ENCODE measurements at regions of chr5 and their contacts with region 1.

Region 1: DNA sequence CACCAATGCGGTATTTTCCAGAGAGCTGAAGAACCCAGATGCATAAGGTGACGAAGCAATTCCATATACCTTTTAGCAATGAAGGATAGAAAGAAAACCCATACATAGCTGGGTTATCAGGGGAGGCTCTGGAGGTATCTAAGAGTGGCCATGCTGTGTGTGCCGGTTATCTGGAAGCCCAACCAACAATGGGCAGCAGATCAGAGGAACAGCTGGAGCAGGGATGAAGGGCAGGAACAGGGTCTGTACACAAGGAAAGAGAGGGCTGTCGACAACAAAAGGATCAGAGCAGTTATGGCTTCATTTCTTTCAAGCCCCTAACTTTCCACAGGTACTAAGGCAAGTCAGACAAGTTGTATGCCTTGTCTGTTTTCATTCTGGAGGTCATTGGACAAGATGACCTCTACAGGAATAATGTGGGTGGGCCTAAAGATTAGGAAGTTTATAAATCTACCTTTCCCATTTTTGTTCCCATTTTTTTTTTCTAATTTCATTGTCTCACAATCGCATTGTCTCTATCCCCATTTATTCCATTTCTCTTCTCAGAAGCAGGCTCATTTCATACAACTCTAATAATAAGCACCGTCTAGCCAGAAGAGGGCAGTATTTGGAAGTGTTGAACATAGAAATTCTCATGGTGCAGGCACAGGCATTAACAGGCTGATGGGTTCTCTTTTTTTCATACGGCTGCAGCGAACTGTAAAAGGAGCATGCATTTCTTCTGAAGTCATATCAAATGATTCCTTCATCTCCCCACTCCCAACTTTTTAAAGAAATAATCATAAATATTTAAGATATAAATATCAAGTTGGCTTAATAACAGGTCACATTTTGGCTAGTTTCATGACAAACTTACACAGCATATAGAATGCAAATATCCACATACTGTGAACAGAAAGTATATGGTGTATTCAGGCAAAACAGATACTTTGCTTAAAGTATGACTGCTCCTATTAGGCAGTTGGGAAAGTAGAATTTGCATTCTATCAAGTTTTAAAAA is 63.5 kb downstream of the ZNF474 start:
- DNase-seq: no peak
- H3K4me3 ChIP-seq: no peak overlapping the region
- H3K27ac ChIP-seq: no peak overlapping the region
- H3K4me1 ChIP-seq: no peaks in the 10 kb centered on the region
- H3K27me3 ChIP-seq: no peaks in the 10 kb centered on the region
- CTCF ChIP-seq: peak; percentile 43 to 71 (median 63)

Region 2: GRCh38 chr5:122228728-122229392 is 36.1 kb after region 1 on chr5:
- intact Hi-C with region 1: no loop called
- DNase-seq: no peak
- H3K4me3 ChIP-seq: no peak overlapping the region
- H3K27ac ChIP-seq: no peak overlapping the region
- H3K4me1 ChIP-seq: no peaks in the 10 kb centered on the region
- H3K27me3 ChIP-seq: no peaks in the 10 kb centered on the region
- CTCF ChIP-seq: no peak

Region 3: DNA sequence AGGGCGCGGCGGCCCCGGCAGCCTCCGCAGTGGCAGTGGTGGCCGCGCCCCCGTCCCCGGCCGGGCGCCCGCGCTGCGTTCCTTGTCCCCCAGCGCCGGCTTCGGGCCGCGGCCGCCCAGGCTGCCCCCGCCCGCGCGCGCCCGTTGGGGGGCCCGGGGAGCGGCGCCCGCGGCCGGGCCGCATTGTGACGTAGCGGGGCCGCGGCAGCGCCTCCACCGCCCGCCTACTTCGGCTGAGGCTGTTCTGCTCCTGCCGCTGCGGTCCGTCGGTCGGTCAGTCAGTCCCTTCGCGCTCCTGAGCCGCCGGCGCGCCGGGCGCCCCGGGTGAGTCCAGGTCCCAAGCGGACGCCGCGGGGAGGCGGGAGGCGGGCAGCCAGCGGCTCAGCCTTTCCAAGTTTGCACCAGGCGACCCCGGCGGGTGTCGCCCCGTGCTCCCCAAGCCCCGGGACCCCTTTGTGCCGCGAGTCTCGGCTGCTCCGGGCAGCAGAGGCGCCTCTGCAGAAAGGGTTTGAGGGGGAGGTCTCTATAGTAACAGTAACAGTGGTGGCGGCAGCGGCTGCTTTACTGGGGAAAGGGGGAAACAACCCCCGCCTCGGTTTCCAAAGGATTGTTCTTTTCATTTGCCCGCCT is 119.3 kb after region 1 on chr5 and contains the start of gene SNCAIP:
- intact Hi-C with region 1: loop called (anchors 5 kb)
- DNase-seq: peak in 1 of 2 donors; percentile 77
- H3K4me3 ChIP-seq: peak within 1 kb of the TSS; percentile 79
- H3K27ac ChIP-seq: peak within 1 kb of the TSS; percentile 84 to 86
- H3K4me1 ChIP-seq: peaks cover 0 to 8% of the 10 kb centered on the region in 2 donors
- H3K27me3 ChIP-seq: no peaks in the 10 kb centered on the region
- CTCF ChIP-seq: no peak
- total RNA-seq, gene SNCAIP: 2.9 TPM

Region 4: DNA sequence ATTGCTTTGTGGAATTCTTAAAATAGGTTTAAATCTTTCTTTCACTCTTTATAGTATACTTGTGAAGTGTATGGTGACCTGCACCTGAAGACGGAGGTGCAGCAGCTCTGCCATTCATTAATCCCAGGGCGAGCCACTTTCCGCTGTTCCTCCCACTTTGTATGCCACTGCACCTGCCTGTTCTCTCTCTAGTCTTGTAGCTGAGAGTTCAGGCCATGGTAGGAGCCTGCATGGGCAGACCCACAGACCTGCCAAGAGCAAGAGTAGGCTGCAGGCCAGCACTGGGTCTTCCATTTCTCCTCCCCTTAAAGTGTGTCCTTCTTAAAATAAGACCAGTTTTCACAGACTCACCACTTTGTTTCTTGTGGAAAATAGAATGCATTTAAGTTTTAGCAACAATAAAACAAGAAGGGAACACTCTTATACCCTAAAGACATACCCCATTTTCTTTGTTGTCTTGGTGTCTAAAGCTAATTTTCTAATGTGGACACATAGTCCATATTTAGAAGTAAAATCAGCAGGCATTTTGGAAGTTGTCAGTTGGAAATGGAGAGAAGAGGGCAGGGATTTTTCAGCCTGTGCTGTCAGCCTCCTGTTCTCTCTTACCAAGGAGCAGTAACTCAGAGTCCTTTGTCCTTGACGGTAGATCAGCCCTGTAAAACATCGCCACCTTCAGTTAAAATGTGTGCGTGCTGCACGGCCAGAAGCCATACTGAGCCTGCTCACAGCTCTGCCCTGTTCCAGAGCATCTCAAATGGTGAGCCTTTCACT is 222.4 kb after region 1 on chr5:
- intact Hi-C with region 1: loop called (anchors 1 kb)
- DNase-seq: peak in 1 of 2 donors; percentile 71
- H3K4me3 ChIP-seq: no peak overlapping the region
- H3K27ac ChIP-seq: no peak overlapping the region
- H3K4me1 ChIP-seq: no peaks in the 10 kb centered on the region
- H3K27me3 ChIP-seq: no peaks in the 10 kb centered on the region
- CTCF ChIP-seq: peak; percentile 54 to 76 (median 64)

Region 5: GRCh38 chr5:122492664-122493063 is 299.9 kb after region 1 on chr5:
- intact Hi-C with region 1: loop called (anchors 2 kb)
- DNase-seq: no peak
- H3K4me3 ChIP-seq: no peak overlapping the region
- H3K27ac ChIP-seq: no peak overlapping the region
- H3K4me1 ChIP-seq: no peaks in the 10 kb centered on the region
- H3K27me3 ChIP-seq: no peaks in the 10 kb centered on the region
- CTCF ChIP-seq: no peak